ENCODE measurements at regions of chr1 and their contacts with region 1.

Region 1: DNA sequence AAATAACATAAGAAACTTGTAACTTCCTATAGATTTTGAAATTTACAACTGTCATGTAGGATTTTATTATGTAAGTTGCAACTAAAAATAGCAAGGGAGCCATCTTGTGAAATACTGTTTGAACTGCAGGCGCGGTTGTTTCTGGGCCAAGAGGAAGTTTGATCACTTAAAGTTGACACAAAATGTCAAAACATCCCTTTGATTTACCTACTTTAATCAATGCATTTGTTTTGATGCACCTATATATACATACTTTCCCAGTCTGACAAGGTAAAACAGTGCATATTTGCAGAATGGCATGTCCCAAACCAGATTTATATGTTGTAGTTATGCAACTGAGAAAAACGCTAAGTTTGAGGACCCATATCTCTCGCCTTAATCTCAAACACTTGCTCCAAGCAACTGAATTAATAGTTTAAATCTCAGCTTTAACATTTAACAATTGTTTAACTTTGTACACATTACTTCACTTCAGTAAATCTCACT is 63.8 kb downstream of the KCNK2 start:
- DNase-seq: no peak
- H3K4me3 ChIP-seq: no peak overlapping the region
- CTCF ChIP-seq: peak; percentile 44

Region 2: DNA sequence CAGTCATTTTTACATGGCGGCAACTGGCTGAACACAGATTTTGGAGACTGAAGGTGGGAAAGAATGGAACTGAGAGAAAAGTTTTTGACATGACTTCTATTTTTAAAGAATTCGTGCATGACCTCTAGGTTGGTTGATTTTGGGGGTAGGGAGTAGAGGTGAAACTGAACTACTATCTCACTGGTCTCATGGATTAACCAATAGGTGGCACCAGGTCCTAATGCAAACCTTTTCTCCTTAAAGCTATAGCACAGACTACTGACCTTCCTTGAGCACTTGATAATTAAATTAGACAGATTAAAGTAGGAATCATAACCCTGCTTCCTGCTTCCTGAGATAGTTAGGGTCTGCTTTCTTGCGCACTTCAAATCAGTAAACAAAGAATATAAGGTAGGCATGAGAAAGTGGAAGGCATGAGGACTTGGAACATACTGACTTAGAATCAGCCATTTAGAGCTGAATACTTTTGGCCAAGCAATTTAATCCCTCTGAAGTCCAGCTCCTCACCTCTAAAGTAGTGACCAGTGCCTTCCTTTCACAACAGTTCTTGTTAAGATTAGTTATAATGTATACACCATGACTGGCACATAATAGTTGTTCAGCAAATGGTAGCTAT is 337.4 kb before region 1 on chr1:
- CTCF ChIA-PET with region 1: interaction called, 23 read pairs
- POLR2A ChIA-PET with region 1: no interaction called
- DNase-seq: no peak
- H3K4me3 ChIP-seq: no peak overlapping the region
- CTCF ChIP-seq: peak; percentile 19

Region 3: DNA sequence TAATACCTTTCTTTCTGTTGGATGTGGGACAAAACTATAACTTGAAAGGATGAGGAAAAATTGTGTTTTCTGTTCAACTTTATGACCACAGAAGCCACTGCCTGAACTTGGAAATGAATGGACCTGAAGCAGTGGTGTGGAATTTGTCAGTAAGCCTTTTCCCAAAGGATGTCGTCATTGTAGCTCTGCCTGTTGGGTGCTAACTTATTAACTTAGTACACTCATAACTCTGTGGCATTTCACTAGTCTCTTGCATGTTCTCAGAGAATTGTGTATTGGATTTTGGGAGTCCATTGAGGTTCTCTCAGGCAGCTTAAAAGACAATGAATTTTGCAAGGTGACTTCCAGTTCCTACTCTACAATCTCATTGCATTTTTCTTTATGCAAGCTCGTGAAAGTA is 14.2 kb before region 1 on chr1:
- CTCF ChIA-PET with region 1: interaction called, 12 read pairs
- POLR2A ChIA-PET with region 1: no interaction called
- DNase-seq: no peak
- H3K4me3 ChIP-seq: no peak overlapping the region
- CTCF ChIP-seq: no peak

Measured in AG04449 (cell line).